Mammary epithelial cell (primary cell): ENCODE measurements at regions of chr2 and their contacts with region 1.

Region 1: GRCh38 chr2:150143087-150143536 is 344.4 kb downstream of the RND3 start:
- DNase-seq: peak; percentile 81
- H3K4me3 ChIP-seq: no peak overlapping the region
- H3K27ac ChIP-seq: peak overlapping the region; percentile 97
- H3K4me1 ChIP-seq: peaks cover 27% of the 10 kb centered on the region
- H3K27me3 ChIP-seq: no peaks in the 10 kb centered on the region
- CTCF ChIP-seq: no peak

Region 2: GRCh38 chr2:149994057-149994753 is 148.9 kb before region 1 on chr2:
- CTCF ChIA-PET with region 1: no interaction called
- dilution Hi-C with region 1: no loop called
- in situ Hi-C with region 1: no loop called
- intact Hi-C with region 1: loop called (anchors 1 kb)
- DNase-seq: peak; percentile 100
- H3K4me3 ChIP-seq: no peak overlapping the region
- H3K27ac ChIP-seq: peak overlapping the region; percentile 74
- H3K4me1 ChIP-seq: peaks cover 29% of the 10 kb centered on the region
- H3K27me3 ChIP-seq: no peaks in the 10 kb centered on the region
- CTCF ChIP-seq: no peak

Region 3: GRCh38 chr2:150012986-150013385 is 130.1 kb before region 1 on chr2:
- CTCF ChIA-PET with region 1: no interaction called
- dilution Hi-C with region 1: no loop called
- in situ Hi-C with region 1: no loop called
- intact Hi-C with region 1: no loop called
- DNase-seq: no peak
- H3K4me3 ChIP-seq: no peak overlapping the region
- H3K27ac ChIP-seq: no peak overlapping the region
- H3K4me1 ChIP-seq: peaks cover 5% of the 10 kb centered on the region
- H3K27me3 ChIP-seq: no peaks in the 10 kb centered on the region
- CTCF ChIP-seq: no peak

Region 4: DNA sequence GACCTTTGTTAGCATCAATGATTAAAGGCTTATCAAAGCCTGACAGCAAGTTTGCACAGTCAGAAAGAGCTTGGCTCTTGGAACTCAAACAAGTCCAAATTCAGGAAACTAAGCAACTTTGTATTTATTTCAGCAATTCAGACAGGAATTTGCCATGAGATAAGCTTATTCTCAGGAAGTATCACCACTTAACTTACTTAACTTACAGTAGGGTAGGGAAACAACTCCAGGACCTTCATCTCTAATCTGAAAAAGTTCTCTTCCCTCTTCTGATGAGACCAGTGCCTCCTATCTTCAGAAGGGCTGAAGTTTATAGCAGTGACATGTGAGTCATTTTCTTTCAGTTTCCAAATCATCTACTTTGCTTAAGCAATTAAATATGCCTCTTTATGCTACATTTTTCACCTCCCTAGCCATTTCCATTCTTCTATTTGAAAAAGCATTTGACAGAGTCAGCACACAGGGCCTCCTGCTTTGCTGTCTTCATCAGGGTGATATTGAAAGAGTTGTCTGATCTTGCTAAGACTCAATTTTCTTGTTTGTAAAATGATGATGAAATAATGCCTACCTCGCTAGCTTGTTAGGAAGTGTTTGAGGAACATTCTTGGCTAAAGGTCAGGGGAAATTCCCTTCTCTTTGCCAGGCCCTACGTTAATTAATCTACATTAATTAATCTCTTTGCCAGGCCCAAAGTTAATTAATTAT is 45.1 kb before region 1 on chr2:
- CTCF ChIA-PET with region 1: no interaction called
- dilution Hi-C with region 1: no loop called
- in situ Hi-C with region 1: no loop called
- intact Hi-C with region 1: loop called (anchors 2 kb)
- DNase-seq: peak; percentile 36
- H3K4me3 ChIP-seq: no peak overlapping the region
- H3K27ac ChIP-seq: peak overlapping the region; percentile 3
- H3K4me1 ChIP-seq: peaks cover 6% of the 10 kb centered on the region
- H3K27me3 ChIP-seq: no peaks in the 10 kb centered on the region
- CTCF ChIP-seq: peak; percentile 36 to 54

Region 5: DNA sequence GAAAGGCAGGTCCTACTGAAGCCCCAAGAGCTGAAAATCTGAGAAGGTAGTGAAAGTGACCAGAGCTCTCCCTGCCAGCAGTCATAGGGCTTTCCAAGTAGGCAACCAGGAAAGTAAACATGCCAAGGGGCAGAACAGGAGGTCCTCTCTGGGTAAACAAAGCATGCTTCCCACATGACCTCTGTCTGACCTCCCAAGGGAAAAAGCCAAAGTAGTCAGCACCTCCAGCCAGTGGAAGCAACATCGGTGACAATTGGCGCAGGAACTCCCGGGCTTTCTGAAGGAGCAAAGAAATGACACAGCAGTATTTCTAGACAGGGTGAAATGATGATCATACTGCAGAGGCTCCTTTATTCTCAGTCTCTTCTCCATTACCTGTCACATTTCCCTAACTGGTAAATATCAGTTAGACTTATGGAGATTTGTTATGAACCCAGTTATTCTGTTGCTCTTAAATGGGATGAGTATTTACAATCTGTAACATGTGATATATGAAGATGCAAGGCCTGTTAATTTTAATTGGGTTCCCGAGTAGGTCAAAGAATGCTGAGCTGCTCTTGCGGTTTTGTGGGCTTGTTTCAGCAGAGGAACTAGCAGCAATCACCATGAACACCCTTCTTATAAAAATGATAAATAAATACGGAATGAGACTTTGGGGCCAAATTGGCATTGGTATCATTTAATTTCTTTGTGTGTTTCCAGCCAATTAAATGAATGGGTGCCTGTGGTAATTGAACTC is 23.4 kb after region 1 on chr2:
- CTCF ChIA-PET with region 1: interaction called, 4 read pairs
- dilution Hi-C with region 1: no loop called
- in situ Hi-C with region 1: no loop called
- intact Hi-C with region 1: loop called (anchors 1 kb)
- DNase-seq: peak; percentile 76
- H3K4me3 ChIP-seq: no peak overlapping the region
- H3K27ac ChIP-seq: peak overlapping the region; percentile 54
- H3K4me1 ChIP-seq: peaks cover 30% of the 10 kb centered on the region
- H3K27me3 ChIP-seq: no peaks in the 10 kb centered on the region
- CTCF ChIP-seq: no peak

Region 6: DNA sequence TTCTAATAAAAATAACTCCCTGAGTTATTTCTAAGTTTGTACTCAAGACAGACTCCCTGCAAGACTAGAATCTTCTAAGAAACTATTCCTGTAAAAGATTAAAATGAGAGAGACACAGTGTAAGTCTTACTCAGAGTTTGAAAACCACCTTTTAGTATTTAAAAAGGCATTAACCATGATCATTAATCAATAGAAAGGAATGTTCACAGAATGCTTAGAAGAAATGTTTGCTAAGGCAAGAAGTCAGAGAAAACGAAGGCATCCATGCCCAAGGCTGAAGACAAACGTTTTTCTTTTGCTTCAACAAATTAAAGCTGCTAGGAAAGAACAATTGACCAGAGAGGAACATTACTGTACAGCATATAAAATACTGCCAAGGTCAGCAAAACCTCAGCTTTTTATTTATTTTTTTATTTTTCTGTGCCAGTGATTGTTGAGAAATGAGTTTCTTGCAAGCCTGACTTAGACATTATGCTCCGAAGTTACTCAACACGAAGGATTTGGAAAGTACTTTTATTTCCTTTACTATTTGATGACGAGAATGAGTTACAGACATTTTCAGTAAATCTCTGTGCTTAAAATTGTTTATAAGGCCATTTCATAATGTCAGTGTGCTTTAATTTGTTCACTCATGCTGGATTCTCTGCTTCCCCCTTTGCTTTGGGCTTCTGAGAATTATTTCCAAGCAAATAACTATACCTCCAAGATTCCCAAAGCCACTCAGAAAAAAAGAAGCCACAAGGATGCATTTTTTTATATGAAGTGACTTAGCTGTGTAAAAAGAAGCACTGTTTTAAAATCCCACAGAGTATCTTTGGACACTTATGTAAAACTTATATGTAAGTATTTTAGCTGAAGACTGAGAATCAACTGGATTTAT is 323.9 kb after region 1 on chr2:
- CTCF ChIA-PET with region 1: interaction called, 4 read pairs
- dilution Hi-C with region 1: no loop called
- in situ Hi-C with region 1: no loop called
- intact Hi-C with region 1: loop called (anchors 2 kb)
- DNase-seq: peak; percentile 49
- H3K4me3 ChIP-seq: no peak overlapping the region
- H3K27ac ChIP-seq: peak overlapping the region; percentile 40
- H3K4me1 ChIP-seq: peaks cover 12% of the 10 kb centered on the region
- H3K27me3 ChIP-seq: no peaks in the 10 kb centered on the region
- CTCF ChIP-seq: no peak